Mammary epithelial cell (primary cell): ENCODE measurements at regions of chr18 and their contacts with region 1.

Region 1: GRCh38 chr18:13289481-13290205 is 71.1 kb downstream of the LDLRAD4 start:
- DNase-seq: no peak
- H3K4me3 ChIP-seq: no peak overlapping the region
- H3K27ac ChIP-seq: no peak overlapping the region
- H3K4me1 ChIP-seq: no peaks in the 10 kb centered on the region
- H3K27me3 ChIP-seq: peaks cover 2% of the 10 kb centered on the region
- CTCF ChIP-seq: no peak

Region 2: DNA sequence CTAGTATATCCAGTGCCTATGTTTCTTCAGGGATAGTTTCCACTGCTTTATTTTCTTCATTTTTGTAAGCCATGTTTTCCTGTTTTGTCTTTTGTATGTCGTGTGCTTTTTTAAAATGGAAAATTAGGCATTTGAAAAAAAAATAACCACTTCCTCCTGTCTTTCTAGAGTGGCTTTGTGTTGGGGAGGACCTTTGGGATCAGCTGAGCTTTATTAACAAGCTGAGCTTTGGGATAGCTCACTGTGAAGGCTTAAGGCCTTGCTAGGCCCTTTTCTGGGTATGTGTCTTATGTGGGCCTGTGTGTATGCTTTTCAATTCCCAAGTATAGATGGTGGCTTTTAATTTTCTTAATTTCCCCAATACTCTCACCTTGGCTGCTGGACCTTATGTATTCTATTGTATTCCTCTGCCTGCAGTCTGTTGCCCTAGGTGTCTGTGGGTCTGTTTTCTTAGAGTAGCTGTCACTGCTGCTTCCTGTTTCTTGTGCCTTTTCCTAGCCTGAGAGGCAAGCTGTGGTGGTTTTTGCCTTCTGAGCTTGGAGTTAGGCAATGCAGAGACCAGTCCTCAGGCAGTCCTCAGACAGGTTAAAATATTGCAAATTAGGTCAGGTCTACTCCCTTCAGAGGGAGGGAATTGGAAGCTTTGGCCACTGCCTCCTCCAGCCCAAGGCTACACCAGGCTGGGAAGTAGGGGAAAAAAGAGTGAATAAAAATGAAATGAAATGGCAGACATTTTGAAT is 63.6 kb after region 1 on chr18:
- CTCF ChIA-PET with region 1: no interaction called
- dilution Hi-C with region 1: no loop called
- in situ Hi-C with region 1: loop called in 1 of 2 experiments (anchors 10 kb)
- intact Hi-C with region 1: no loop called
- DNase-seq: no peak
- H3K4me3 ChIP-seq: no peak overlapping the region
- H3K27ac ChIP-seq: no peak overlapping the region
- H3K4me1 ChIP-seq: no peaks in the 10 kb centered on the region
- H3K27me3 ChIP-seq: no peaks in the 10 kb centered on the region
- CTCF ChIP-seq: no peak